A673 (cell line): ENCODE measurements at regions of chr10 and their contacts with region 1.

Region 1: GRCh38 chr10:50624866-50625692 is 1.3 kb upstream of the SGMS1 start:
- DNase-seq: peak; percentile 78
- H3K4me3 ChIP-seq: peak overlapping the region; percentile 67
- H3K27ac ChIP-seq: peak overlapping the region; percentile 96
- H3K4me1 ChIP-seq: peaks cover 20% of the 10 kb centered on the region
- H3K27me3 ChIP-seq: no peaks in the 10 kb centered on the region
- CTCF ChIP-seq: peak; percentile 40

Region 2: GRCh38 chr10:50417886-50418830 is 206.9 kb before region 1 on chr10:
- CTCF ChIA-PET with region 1: interaction called, 5 read pairs
- POLR2A ChIA-PET with region 1: no interaction called
- intact Hi-C with region 1: loop called (anchors 5 kb)
- DNase-seq: peak; percentile 85
- H3K4me3 ChIP-seq: peak overlapping the region; percentile 71
- H3K27ac ChIP-seq: peak overlapping the region; percentile 39
- H3K4me1 ChIP-seq: peaks cover 3% of the 10 kb centered on the region
- H3K27me3 ChIP-seq: no peaks in the 10 kb centered on the region
- CTCF ChIP-seq: 0 out of 2 replicates have a peak, but pooled peaks have one; percentile 9

Region 3: DNA sequence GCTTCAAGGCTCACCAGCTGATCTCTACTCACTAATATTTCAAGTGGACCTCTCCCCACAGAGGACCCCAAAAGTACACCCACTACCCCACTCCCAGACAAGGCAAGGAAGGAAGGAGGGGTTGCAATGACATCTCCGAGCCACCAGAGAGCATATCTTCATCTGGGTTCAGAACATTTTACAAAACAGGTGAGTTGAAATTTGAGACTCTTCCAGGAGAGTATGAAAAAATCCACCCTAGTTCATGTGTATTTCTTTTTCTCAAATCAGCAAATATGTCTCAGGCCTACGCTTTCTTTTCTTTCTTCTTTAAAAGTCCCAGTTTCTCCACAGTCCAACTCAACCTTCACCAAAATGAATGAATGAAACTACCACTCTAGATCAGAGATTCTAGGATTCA is 63.3 kb before region 1 on chr10:
- CTCF ChIA-PET with region 1: no interaction called
- POLR2A ChIA-PET with region 1: no interaction called
- intact Hi-C with region 1: loop called (anchors 1 kb)
- DNase-seq: no peak
- H3K4me3 ChIP-seq: no peak overlapping the region
- H3K27ac ChIP-seq: no peak overlapping the region
- H3K4me1 ChIP-seq: peaks cover 16% of the 10 kb centered on the region
- H3K27me3 ChIP-seq: no peaks in the 10 kb centered on the region
- CTCF ChIP-seq: peak; percentile 62

Region 4: DNA sequence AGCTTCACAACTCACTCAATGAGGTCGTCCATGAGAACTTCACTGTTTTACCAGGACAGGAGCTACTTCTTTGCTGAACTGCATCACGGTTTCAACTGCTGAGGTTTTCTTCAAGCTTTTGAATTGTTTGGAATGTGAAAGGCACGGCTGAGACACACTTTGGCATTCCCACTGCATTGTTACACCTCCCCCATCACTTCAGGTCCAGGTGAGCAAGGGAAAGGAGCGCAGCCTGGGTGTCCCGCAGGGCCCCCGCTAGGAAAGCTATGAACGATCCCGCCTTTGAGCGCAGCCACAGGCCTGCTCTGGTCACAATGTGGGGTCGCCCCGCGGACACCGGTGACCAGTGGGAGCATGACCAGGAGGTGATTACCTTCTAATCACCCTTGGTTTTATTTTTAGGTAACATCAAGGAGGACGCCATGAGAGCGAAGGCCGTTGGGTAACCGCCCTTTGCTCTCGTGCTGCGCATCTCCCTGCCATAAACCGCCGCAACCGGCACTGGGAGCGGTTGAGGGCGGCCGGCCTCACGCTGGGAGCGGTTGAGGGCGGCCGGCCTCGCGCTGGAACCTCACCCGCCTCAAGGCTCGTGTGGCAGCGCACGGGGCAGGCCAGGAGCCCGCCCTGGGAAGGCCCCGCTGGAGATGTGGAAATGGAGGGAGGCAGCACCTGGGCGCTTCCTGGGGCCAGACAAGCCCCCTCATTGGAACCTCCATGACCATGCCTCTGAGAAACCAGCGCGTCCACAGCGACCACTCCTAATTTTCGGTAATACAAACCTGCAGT is 49.6 kb after region 1 on chr10:
- CTCF ChIA-PET with region 1: no interaction called
- POLR2A ChIA-PET with region 1: no interaction called
- intact Hi-C with region 1: no loop called
- DNase-seq: no peak
- H3K4me3 ChIP-seq: no peak overlapping the region
- H3K27ac ChIP-seq: no peak overlapping the region
- H3K4me1 ChIP-seq: no peaks in the 10 kb centered on the region
- H3K27me3 ChIP-seq: no peaks in the 10 kb centered on the region
- CTCF ChIP-seq: no peak

Region 5: GRCh38 chr10:51638737-51639136 is 1013.7 kb after region 1 on chr10:
- CTCF ChIA-PET with region 1: no interaction called
- POLR2A ChIA-PET with region 1: no interaction called
- intact Hi-C with region 1: no loop called
- DNase-seq: no peak
- H3K4me3 ChIP-seq: no peak overlapping the region
- H3K27ac ChIP-seq: no peak overlapping the region
- H3K4me1 ChIP-seq: no peaks in the 10 kb centered on the region
- H3K27me3 ChIP-seq: peaks cover 35% of the 10 kb centered on the region
- CTCF ChIP-seq: peak; percentile 29; the same call in 1 of the 2 replicates